Heart right ventricle (tissue), 16 donors: ENCODE measurements at regions of chr1 and their contacts with region 1.

Region 1: GRCh38 chr1:13792419-13792818 is 92.4 kb downstream of the PRDM2 start:
- DNase-seq: no peak
- ATAC-seq: peak in 7 of 8 donors; percentile 22 to 76 (median 61)
- H3K4me3 ChIP-seq: no peak overlapping the region
- H3K27ac ChIP-seq: peak overlapping the region in 9 of 10 donors; percentile 14 to 71 (median 57)
- H3K4me1 ChIP-seq: peaks cover 0 to 28% (median 10%) of the 10 kb centered on the region in 9 donors
- H3K27me3 ChIP-seq: no peaks in the 10 kb centered on the region
- CTCF ChIP-seq: no peak

Region 2: DNA sequence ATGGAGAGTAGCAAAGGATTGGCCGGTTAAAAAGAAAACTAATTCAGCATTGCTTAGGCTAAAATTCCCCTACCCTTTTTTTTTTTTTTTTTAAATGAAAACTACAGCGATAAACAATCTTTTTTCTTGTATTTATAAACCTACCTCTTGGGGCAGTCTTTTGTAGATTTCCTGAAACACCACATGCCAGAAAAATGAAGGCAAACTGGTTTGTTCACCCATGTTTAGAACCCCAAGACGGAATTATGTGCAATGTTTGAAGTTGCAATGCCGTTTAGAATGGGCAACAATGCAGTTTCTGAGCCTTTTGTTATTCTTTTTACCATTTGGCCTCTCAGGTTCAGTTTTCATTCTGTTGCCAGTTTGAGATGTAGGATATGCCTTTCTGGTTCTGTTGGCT is 33.3 kb before region 1 on chr1:
- intact Hi-C with region 1: loop called in 1 of 10 experiments (anchors 5 kb)
- DNase-seq: no peak
- ATAC-seq: no peak
- H3K4me3 ChIP-seq: no peak overlapping the region
- H3K27ac ChIP-seq: peak overlapping the region in 1 of 10 donors; percentile 25
- H3K4me1 ChIP-seq: peaks cover 0 to 98% (median 87%) of the 10 kb centered on the region in 9 donors
- H3K27me3 ChIP-seq: no peaks in the 10 kb centered on the region
- CTCF ChIP-seq: peak in 1 of 9 donors; percentile 4

Region 3: DNA sequence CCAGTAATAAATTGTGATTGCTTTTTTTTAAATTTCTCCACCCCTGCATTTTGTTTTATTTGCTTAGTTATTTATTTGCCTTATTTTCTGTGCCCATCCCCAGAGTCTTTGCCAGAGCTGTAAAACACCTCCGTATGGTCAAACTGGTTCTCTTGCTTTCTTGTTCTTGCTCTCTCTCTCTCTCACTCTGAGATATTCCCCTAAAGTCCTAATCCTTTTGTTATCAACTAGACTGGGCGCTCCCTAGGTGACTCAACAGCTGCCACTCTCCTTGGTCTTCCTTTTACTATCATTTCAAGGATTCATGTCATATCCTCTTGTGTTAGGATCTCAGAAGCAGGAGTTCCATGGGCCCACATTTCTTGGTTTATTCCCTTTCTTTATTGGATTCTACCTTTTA is 67.6 kb after region 1 on chr1:
- intact Hi-C with region 1: no loop called
- DNase-seq: no peak
- ATAC-seq: no peak
- H3K4me3 ChIP-seq: no peak overlapping the region
- H3K27ac ChIP-seq: no peak overlapping the region
- H3K4me1 ChIP-seq: no peaks in the 10 kb centered on the region
- H3K27me3 ChIP-seq: peaks cover 0 to 24% (median 3%) of the 10 kb centered on the region in 7 donors
- CTCF ChIP-seq: no peak